ENCODE measurements at regions of chr2 and their contacts with region 1.

Region 1: DNA sequence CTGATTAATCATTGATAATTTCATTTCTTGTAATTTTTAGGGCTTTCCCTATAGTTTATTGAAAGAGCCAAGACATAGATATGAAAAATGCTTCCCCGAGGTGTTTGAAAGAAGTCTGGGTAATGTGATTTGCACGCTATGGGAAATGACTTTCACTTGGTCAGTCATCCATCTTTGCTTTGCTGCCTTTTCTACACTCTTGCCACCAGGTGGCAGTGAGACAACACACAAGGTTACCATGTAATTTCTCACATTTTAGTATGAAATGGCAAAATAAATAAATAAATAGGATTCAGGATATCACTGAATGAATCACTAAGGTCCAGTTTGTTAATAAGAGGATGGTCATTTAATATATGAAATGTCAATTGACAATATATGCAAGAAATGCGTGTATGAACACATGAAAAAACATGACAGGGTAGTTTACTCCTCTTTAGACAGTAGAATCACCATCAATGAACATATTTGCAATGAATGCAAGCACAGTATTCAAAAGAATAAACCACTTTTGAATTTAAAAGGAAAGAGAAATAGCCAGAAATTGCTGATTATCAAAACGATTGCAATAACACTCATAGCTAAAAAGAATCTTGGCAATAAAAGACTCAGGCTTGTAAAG is 52.2 kb upstream of the KCNH7 start:
- DNase-seq: peak; percentile 40
- ATAC-seq: peak; percentile 60
- H3K4me3 ChIP-seq: no peak overlapping the region
- H3K27ac ChIP-seq: no peak overlapping the region
- H3K4me1 ChIP-seq: no peaks in the 10 kb centered on the region
- H3K27me3 ChIP-seq: no peaks in the 10 kb centered on the region
- CTCF ChIP-seq: peak; percentile 75
- POLR2A ChIP-seq: no peak
- RAD21 ChIP-seq: peak; percentile 68

Region 2: DNA sequence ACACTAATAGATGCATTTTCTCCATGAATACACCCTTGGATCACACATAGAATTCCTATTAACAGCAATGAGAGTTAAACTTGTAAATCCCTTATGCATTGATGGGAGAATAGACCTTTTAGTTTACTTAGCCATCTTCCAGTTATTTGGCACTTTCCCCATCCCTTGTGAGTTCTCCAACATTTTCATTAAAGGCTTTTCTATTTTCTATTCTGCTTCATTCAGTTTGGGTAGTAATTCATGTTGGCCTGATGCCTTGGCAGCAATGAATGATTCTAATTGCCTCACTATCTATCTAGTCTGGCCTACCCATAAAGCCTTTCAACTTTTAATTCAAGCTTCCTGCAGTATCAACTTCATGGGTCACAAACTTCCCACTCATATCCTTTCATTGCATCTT is 1442.4 kb before region 1 on chr2:
- CTCF ChIA-PET with region 1: no interaction called
- POLR2A ChIA-PET with region 1: no interaction called
- dilution Hi-C with region 1: no loop called
- in situ Hi-C with region 1: no loop called
- intact Hi-C with region 1: no loop called
- DNase-seq: no peak
- ATAC-seq: no peak
- H3K4me3 ChIP-seq: no peak overlapping the region
- H3K27ac ChIP-seq: no peak overlapping the region
- H3K4me1 ChIP-seq: no peaks in the 10 kb centered on the region
- H3K27me3 ChIP-seq: no peaks in the 10 kb centered on the region
- CTCF ChIP-seq: no peak
- POLR2A ChIP-seq: no peak
- RAD21 ChIP-seq: no peak

Region 3: DNA sequence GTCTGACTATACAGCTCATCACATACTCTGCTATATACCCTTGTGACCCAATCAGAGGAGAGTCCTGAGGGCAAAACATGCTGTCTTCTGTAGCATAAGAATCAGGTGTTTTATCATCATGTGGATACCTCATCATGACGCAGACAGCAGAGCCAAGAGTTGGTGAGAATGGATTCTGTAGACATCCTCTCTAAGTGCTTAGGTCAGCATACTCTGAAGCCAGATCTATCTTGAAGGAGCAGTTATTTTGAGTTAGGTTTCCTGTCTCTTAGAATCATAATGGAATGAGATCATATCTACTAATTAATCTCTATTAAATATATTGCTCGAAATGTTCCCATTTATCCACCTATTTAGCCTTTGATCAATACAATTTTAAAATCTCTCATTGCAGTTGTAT is 138.0 kb after region 1 on chr2:
- CTCF ChIA-PET with region 1: no interaction called
- POLR2A ChIA-PET with region 1: no interaction called
- dilution Hi-C with region 1: no loop called
- in situ Hi-C with region 1: no loop called
- intact Hi-C with region 1: no loop called
- DNase-seq: no peak
- ATAC-seq: no peak
- H3K4me3 ChIP-seq: no peak overlapping the region
- H3K27ac ChIP-seq: no peak overlapping the region
- H3K4me1 ChIP-seq: no peaks in the 10 kb centered on the region
- H3K27me3 ChIP-seq: no peaks in the 10 kb centered on the region
- CTCF ChIP-seq: no peak
- POLR2A ChIP-seq: no peak
- RAD21 ChIP-seq: no peak

Region 4: DNA sequence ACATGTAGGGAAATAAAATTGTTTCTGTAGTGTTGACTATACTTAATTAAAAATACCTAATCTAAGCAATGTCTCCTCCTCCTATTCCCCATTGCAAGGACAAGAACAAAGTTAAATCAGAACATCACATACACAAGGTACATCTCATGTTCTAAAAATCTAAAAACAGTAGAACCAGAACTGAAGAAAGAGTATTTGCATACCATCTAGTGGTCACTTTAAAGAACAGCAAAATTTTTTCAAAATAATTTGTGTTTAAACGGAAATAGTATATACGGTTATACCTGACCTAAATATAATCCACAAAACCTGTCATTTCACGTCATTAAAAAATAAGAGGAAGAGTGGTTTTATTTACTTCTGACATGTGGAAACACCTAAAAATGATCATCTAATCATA is 242.0 kb after region 1 on chr2:
- CTCF ChIA-PET with region 1: no interaction called
- POLR2A ChIA-PET with region 1: no interaction called
- dilution Hi-C with region 1: no loop called
- in situ Hi-C with region 1: no loop called
- intact Hi-C with region 1: loop called (anchors 2 kb)
- DNase-seq: peak; percentile 2
- ATAC-seq: no peak
- H3K4me3 ChIP-seq: no peak overlapping the region
- H3K27ac ChIP-seq: no peak overlapping the region
- H3K4me1 ChIP-seq: no peaks in the 10 kb centered on the region
- H3K27me3 ChIP-seq: no peaks in the 10 kb centered on the region
- CTCF ChIP-seq: peak; percentile 56
- POLR2A ChIP-seq: no peak
- RAD21 ChIP-seq: peak; percentile 42

Region 5: GRCh38 chr2:164495491-164496223 is 1604.9 kb after region 1 on chr2:
- CTCF ChIA-PET with region 1: no interaction called
- POLR2A ChIA-PET with region 1: no interaction called
- dilution Hi-C with region 1: no loop called
- in situ Hi-C with region 1: no loop called
- intact Hi-C with region 1: loop called (anchors 5 kb)
- DNase-seq: peak; percentile 43
- ATAC-seq: peak; percentile 48; the same call in 1 of the 2 replicates
- H3K4me3 ChIP-seq: no peak overlapping the region
- H3K27ac ChIP-seq: no peak overlapping the region
- H3K4me1 ChIP-seq: no peaks in the 10 kb centered on the region
- H3K27me3 ChIP-seq: no peaks in the 10 kb centered on the region
- CTCF ChIP-seq: peak; percentile 60
- POLR2A ChIP-seq: no peak
- RAD21 ChIP-seq: peak; percentile 65

Measured in IMR-90 (cell line).